GM12878 (cell line): ENCODE measurements at regions of chr5 and their contacts with region 1.

Region 1: GRCh38 chr5:169701910-169702451 is 64.9 kb downstream of the DOCK2 start:
- DNase-seq: no peak
- ATAC-seq: no peak
- H3K4me3 ChIP-seq: no peak overlapping the region
- H3K27ac ChIP-seq: peak overlapping the region; percentile 89
- H3K4me1 ChIP-seq: peaks cover 51% of the 10 kb centered on the region
- H3K27me3 ChIP-seq: no peaks in the 10 kb centered on the region
- CTCF ChIP-seq: peak; percentile 30 to 50 (median 39); a peak in 4 of 6 replicates
- EP300 ChIP-seq: no peak
- POLR2A ChIP-seq: no peak
- RAD21 ChIP-seq: peak; percentile 54

Region 2: DNA sequence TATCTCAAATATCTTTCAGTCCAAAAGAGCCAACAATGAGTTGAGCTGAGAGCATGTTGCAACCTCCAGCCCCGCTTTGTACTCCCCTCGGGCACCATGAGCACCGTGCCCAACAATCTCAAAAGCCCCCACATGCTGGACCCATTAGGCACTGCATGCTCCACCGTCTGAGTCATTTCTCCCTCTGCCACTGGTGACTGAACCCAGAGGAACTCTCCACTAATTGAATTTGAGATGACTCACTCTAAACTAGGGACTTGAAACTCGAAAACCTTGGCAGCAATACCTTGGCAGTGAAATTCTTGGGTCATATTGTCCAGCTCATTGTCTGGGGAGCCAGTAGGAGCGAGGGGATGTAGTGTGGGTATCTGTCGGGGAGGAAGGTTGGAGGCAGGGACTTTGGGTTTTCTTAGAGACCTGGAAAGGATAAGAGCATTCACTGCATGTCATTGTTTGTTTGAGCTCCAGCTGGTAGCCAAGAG is 351.2 kb before region 1 on chr5:
- CTCF ChIA-PET with region 1: no interaction called
- POLR2A ChIA-PET with region 1: no interaction called
- RAD21 ChIA-PET with region 1: no interaction called
- SMC1A ChIA-PET with region 1: no interaction called
- in situ Hi-C with region 1: no loop called
- intact Hi-C with region 1: no loop called
- DNase-seq: no peak
- ATAC-seq: peak; percentile 57
- H3K4me3 ChIP-seq: no peak overlapping the region
- H3K27ac ChIP-seq: no peak overlapping the region
- H3K4me1 ChIP-seq: no peaks in the 10 kb centered on the region
- H3K27me3 ChIP-seq: no peaks in the 10 kb centered on the region; a peak in 2 of 4 replicates
- CTCF ChIP-seq: no peak
- EP300 ChIP-seq: no peak
- POLR2A ChIP-seq: no peak
- RAD21 ChIP-seq: no peak

Region 3: GRCh38 chr5:169637085-169637548 is 64.9 kb before region 1 on chr5 and contains the start of gene DOCK2:
- CTCF ChIA-PET with region 1: interaction called, 4 read pairs
- POLR2A ChIA-PET with region 1: interaction called, 4 read pairs
- RAD21 ChIA-PET with region 1: interaction called, 11 read pairs
- SMC1A ChIA-PET with region 1: interaction called, 3 read pairs
- in situ Hi-C with region 1: no loop called
- intact Hi-C with region 1: no loop called
- DNase-seq: no peak
- ATAC-seq: peak; percentile 95
- H3K4me3 ChIP-seq: peak within 1 kb of the TSS; percentile 89
- H3K27ac ChIP-seq: peak within 1 kb of the TSS; percentile 98
- H3K4me1 ChIP-seq: peaks cover 12% of the 10 kb centered on the region; the same call in 1 of the 2 replicates
- H3K27me3 ChIP-seq: no peaks in the 10 kb centered on the region
- CTCF ChIP-seq: no peak
- EP300 ChIP-seq: peak in 1 of 2 experiments; percentile 31; a peak in 1 of 4 replicates
- POLR2A ChIP-seq: peak; percentile 93
- RAD21 ChIP-seq: no peak
- polyA plus RNA-seq, gene DOCK2: 34.2 to 41.6 TPM

Region 4: DNA sequence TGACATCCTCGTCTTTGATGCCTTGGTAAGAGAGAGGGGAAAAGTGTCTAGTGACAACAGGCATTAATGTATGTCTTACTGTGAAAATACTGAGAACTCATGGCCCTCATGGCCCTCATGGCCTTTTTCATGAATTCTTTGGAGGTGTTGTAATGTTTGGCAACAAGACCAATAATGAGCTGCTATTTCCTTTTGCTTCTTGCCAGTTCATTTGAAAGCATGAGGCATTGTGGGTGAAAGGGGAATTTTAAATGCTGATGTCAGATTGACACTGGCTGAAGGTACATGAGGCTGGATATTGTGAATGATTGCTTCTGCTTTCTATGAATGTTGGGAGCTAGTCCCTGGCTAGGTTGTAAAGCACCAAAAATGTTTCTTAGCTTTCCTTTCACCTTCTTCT is 14.3 kb after region 1 on chr5:
- CTCF ChIA-PET with region 1: interaction called, 20 read pairs
- POLR2A ChIA-PET with region 1: interaction called, 10 read pairs
- RAD21 ChIA-PET with region 1: interaction called, 47 read pairs
- SMC1A ChIA-PET with region 1: interaction called, 123 read pairs
- in situ Hi-C with region 1: no loop called
- intact Hi-C with region 1: no loop called
- DNase-seq: no peak
- ATAC-seq: peak; percentile 11; the same call in 2 of the 3 replicates
- H3K4me3 ChIP-seq: no peak overlapping the region
- H3K27ac ChIP-seq: peak overlapping the region; percentile 22
- H3K4me1 ChIP-seq: peaks cover 17% of the 10 kb centered on the region
- H3K27me3 ChIP-seq: no peaks in the 10 kb centered on the region
- CTCF ChIP-seq: no peak
- EP300 ChIP-seq: no peak; a peak in 1 of 4 replicates
- POLR2A ChIP-seq: no peak
- RAD21 ChIP-seq: no peak

Region 5: DNA sequence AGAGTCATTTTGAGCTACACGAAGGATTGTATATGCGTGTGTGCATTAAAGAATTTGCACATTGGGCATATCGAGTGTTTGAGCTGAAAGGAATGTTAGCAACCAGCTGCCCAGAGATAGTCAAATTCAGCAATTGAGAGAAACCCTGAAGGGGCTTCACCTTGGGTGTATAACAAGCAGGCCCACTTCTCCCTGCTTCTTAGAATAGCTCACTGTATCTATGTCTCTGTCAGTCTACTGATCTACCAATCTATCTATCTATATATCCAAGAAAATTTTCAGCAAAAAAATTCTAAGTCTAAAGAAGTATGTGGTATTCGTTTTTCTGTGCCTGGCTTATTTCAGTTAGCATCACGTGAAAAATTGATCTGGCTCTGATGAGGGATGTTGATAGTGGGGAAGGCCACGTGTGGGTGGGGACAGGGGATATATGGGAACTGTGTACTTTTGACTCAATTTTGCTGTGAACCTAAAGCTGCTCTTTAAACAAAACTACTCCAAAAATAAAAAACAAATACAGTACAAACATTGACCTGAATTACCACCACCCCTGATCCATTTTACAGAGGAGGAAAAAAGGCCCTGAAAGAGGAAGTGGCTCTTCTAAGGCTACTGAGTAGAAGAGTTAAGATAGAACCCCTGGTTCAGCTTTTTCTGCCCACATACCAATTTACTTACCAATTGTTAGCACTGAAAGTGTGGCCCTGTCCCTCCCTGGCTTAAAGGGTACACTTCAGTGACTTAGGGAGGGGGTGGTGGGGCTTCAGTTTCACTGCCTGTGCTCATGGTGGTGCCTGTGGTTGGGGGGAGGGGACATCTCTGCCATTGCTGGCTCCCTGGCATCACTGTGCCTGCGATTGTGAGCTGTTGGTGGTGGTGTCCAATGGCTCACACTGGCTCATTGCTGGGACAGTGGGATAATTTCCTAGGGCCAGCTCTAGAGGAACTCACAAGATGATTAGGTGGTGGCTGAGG is 76.9 kb after region 1 on chr5:
- CTCF ChIA-PET with region 1: interaction called, 20 read pairs
- POLR2A ChIA-PET with region 1: interaction called, 6 read pairs
- RAD21 ChIA-PET with region 1: interaction called, 24 read pairs
- SMC1A ChIA-PET with region 1: interaction called, 33 read pairs
- in situ Hi-C with region 1: no loop called
- intact Hi-C with region 1: no loop called
- DNase-seq: peak; percentile 87
- ATAC-seq: peak; percentile 97
- H3K4me3 ChIP-seq: no peak overlapping the region
- H3K27ac ChIP-seq: peak overlapping the region; percentile 80
- H3K4me1 ChIP-seq: peaks cover 29% of the 10 kb centered on the region
- H3K27me3 ChIP-seq: no peaks in the 10 kb centered on the region
- CTCF ChIP-seq: no peak
- EP300 ChIP-seq: peak; percentile 60 to 82; a peak in 2 of 4 replicates
- POLR2A ChIP-seq: no peak
- RAD21 ChIP-seq: no peak

Region 6: DNA sequence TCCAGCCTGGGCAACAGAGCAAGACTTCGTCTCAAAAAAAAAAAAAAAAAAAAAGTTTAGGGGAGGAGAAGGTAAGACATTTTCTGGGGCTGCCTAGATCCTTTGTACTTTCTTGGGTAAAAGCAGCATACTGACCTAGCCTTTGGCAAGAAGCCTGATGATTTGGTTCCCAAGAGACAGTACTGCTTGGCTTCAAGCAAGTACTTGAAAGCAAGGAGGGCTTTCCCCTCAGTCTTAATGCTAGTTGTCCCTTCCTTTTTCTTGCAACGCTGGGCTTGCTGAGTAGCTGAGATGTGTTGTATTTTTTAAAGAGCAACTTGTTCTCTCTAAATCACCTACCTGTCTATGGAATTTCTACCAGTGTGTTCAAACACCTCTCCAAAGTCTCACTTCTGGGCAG is 202.1 kb after region 1 on chr5:
- CTCF ChIA-PET with region 1: interaction called, 4 read pairs
- POLR2A ChIA-PET with region 1: no interaction called
- RAD21 ChIA-PET with region 1: interaction called, 6 read pairs
- SMC1A ChIA-PET with region 1: interaction called, 6 read pairs
- in situ Hi-C with region 1: no loop called
- intact Hi-C with region 1: loop called (anchors 10 kb)
- DNase-seq: peak; percentile 16
- ATAC-seq: peak; percentile 67
- H3K4me3 ChIP-seq: no peak overlapping the region
- H3K27ac ChIP-seq: no peak overlapping the region
- H3K4me1 ChIP-seq: 0 out of 2 replicates have a peak, but pooled peaks cover 3% of the 10 kb centered on the region
- H3K27me3 ChIP-seq: no peaks in the 10 kb centered on the region
- CTCF ChIP-seq: no peak
- EP300 ChIP-seq: no peak
- POLR2A ChIP-seq: no peak
- RAD21 ChIP-seq: no peak

Region 7: GRCh38 chr5:170112876-170113521 is 411.0 kb after region 1 on chr5:
- CTCF ChIA-PET with region 1: no interaction called
- POLR2A ChIA-PET with region 1: interaction called, 11 read pairs
- RAD21 ChIA-PET with region 1: no interaction called
- SMC1A ChIA-PET with region 1: no interaction called
- in situ Hi-C with region 1: no loop called
- intact Hi-C with region 1: no loop called
- DNase-seq: no peak
- ATAC-seq: no peak
- H3K4me3 ChIP-seq: no peak overlapping the region
- H3K27ac ChIP-seq: no peak overlapping the region
- H3K4me1 ChIP-seq: no peaks in the 10 kb centered on the region
- H3K27me3 ChIP-seq: peaks cover 0 to 1% of the 10 kb centered on the region in 2 experiments; a peak in 3 of 4 replicates
- CTCF ChIP-seq: no peak
- EP300 ChIP-seq: no peak
- POLR2A ChIP-seq: no peak
- RAD21 ChIP-seq: no peak